ENCODE measurements at regions of chr12 and their contacts with region 1.

Region 1: DNA sequence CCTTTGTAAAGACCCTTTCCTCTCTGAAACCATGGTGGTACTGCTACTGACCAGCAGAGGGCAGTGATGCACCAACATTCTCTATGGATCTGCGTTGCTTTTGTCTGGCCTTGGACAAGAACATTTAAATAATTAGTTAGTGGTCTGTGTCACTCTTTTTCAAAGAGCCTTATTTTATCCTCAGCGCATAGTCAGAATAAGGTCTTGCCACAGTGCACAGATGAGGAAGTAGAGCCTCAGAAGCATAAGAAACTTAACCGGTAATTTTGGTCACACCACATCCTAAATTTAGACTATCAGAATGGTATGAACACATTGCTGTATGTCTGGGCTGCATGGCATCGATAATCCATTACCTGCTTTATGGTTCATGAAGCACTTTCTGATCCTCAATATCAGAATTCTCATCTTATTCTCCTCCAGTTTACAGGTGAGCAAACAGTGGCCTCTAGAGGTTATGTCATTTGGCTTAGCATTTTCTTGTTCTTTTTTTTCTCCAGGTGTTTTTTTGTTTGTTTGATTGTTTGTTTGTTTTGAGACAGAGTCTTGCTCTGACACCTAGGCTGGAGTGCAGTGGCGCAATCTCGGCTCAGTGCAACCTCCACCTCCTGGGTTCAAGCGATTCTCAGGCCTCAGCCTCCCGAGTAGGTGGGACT is 23.7 kb upstream of the IFT81 start:
- DNase-seq: peak; percentile 75
- H3K4me3 Mint-ChIP-seq: no peak overlapping the region
- H3K27ac Mint-ChIP-seq: peak overlapping the region; percentile 1
- H3K4me1 Mint-ChIP-seq: peaks cover 13% of the 10 kb centered on the region
- H3K27me3 Mint-ChIP-seq: peaks cover 18% of the 10 kb centered on the region

Region 2: DNA sequence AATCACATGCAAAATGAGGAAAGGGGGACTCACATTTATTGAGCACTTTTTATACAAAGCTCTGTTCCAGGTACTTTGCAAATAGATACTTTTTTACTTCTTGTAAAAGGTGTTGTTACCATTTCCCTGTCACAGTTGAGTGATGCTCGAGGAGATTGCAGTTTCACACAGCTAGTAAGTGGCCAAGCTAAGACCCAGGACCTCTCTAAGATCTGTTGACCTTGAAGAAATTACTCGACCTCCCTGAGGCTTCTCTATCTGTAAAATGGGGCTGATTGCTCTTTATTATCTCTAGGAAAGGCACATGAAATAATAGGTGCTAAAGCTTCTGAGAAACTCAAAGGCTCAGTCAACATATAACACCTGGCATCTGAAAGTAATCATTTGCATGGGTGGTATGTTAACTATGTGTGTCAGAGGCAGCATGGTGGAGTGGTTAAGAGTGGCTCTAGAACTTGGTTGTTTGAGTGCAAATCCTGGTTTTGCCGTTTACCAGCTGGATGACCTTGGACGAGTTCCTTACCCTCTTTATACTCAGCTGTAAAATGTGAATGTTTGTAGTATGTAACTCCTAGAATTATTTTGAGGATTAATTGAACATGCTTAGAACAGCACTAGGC is 65.2 kb after region 1 on chr12:
- CTCF ChIA-PET with region 1: no interaction called
- DNase-seq: no peak
- H3K4me3 Mint-ChIP-seq: no peak overlapping the region
- H3K27ac Mint-ChIP-seq: no peak overlapping the region
- H3K4me1 Mint-ChIP-seq: no peaks in the 10 kb centered on the region
- H3K27me3 Mint-ChIP-seq: no peaks in the 10 kb centered on the region

Region 3: GRCh38 chr12:110224379-110225304 is 124.2 kb after region 1 on chr12:
- CTCF ChIA-PET with region 1: interaction called, 12 read pairs
- DNase-seq: no peak
- H3K4me3 Mint-ChIP-seq: no peak overlapping the region
- H3K27ac Mint-ChIP-seq: no peak overlapping the region
- H3K4me1 Mint-ChIP-seq: no peaks in the 10 kb centered on the region
- H3K27me3 Mint-ChIP-seq: peaks cover 13% of the 10 kb centered on the region

Region 4: DNA sequence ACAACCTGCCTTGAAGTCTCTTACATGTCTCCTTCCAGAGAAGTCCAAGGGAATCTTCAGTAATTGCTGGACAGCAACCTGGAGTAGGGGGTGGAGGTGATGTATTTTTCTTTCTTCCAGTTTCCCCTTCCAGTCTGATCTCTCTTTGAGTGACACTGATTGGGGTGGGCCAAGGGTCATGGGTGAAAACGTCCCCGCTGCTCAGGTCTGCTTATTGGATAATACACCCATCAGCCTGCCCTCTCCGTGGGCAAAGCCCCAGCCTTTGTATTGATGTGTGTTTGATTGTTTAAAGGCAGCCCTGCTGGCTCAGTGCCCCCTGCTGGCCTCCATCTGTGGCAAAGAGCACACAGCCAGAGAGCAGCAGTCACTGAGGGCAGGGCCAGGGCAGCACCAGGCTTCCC is 144.9 kb after region 1 on chr12:
- CTCF ChIA-PET with region 1: interaction called, 16 read pairs
- DNase-seq: peak; percentile 75
- H3K4me3 Mint-ChIP-seq: no peak overlapping the region
- H3K27ac Mint-ChIP-seq: no peak overlapping the region
- H3K4me1 Mint-ChIP-seq: no peaks in the 10 kb centered on the region
- H3K27me3 Mint-ChIP-seq: peaks cover 37% of the 10 kb centered on the region

Region 5: DNA sequence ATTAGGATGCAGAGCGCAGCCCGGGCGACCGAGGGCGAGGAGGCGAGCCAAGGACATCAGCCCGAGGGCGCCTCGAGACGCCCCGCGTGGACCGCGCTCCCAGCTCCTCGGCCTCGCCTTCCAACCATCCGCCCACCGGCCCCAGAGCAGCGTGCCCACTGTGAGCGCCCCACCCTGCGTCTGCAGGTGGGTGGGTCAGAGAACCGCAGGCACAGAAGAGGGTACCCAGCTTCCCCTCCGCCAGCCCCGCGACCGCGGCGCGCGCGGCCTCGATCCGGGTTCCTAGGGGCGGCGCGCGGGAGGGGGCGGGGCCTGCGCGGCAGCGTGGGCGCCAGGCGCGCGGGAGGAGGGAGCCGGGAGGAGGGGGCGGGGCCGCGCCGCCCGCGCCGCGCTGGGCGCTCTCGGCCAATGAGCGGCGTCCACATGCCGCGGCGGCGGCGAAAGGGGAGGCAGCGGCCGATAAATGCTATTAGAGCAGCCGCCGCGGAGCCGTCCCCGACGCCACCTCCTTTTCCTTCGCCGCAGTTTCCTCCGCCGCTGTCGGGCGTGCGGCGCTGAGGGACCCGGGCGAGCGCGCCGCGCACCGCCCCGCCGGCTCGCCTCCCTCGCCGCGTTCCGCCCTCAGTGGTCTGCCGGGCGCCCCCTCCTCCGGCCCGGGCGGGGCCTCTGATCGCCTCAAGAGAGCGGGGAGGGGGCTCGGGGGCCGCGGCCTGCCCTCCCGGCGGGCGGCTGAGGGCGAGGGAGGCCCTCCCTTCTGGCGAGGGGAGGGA is 180.5 kb after region 1 on chr12 and contains the start of gene ATP2A2:
- CTCF ChIA-PET with region 1: interaction called, 10 read pairs
- DNase-seq: peak; percentile 92
- H3K4me3 Mint-ChIP-seq: peak within 1 kb of the TSS; percentile 89
- H3K27ac Mint-ChIP-seq: peak within 1 kb of the TSS; percentile 89
- H3K4me1 Mint-ChIP-seq: peaks cover 55% of the 10 kb centered on the region
- H3K27me3 Mint-ChIP-seq: peaks cover 25% of the 10 kb centered on the region

Region 6: DNA sequence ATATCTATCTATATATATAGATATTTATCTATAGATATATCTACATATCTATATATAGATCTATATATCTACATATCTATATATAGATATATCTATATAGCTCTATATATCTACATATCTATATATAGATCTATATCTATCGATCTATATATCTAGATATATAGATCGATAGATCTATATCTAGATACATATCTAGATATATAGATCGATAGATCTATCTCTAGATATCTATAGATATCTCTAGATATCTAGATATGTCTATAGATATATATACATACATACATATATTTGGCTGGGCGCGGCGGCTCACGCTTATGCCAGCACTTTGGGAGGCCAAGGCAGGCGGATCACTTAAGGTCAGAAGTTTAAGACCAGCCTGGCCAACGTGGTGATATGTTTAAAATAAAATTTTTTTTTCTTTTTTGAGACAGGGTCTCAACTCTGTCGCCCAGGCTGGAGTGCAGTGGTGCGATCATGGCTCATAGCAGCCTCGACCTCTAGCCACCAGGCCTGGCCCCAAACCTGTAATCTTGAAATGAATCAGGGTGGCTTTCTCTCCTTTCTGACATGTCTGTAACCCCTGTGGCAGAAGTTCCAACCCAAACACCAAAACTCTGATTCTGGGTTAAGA is 331.6 kb after region 1 on chr12:
- CTCF ChIA-PET with region 1: interaction called, 38 read pairs
- DNase-seq: no peak
- H3K4me3 Mint-ChIP-seq: no peak overlapping the region
- H3K27ac Mint-ChIP-seq: peak overlapping the region; percentile 78
- H3K4me1 Mint-ChIP-seq: peaks cover 5% of the 10 kb centered on the region
- H3K27me3 Mint-ChIP-seq: peaks cover 6% of the 10 kb centered on the region

Measured in activated naive CD4-positive, alpha-beta T cell treated with anti-CD3 and anti-CD28 coated beads, Interleukin-2, amount 10 ng/mL, durations not matched to agents 7 days and 5 days (primary cell).